CD4-positive, alpha-beta memory T cell (primary cell): ENCODE measurements at regions of chrX and their contacts with region 1.

Region 1: DNA sequence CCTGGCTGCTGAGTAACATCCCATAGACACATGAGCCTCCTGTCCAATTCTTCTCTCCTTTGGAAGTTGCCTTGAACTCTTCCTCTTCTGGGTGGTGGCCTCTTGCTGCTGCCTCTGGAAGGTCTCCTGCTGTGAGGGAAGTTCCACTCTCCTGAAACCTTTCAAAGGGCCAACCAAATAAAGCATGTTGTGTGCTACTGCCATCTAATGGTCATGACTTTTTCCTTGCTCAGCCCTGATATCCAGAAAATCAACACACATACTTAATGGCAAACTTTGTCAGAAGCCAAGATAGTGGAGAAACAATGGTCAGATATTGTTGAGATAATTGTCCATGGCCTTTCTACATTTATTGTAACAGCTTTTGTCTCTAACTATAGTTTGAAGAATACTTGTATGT is 19.1 kb upstream of the ZXDA start:
- DNase-seq: no peak
- H3K4me3 ChIP-seq: no peak overlapping the region
- H3K4me3 Mint-ChIP-seq: no peak overlapping the region
- H3K27ac ChIP-seq: no peak overlapping the region
- H3K27ac Mint-ChIP-seq: peak overlapping the region in 1 of 7 donors; percentile 22
- H3K4me1 ChIP-seq: no peaks in the 10 kb centered on the region
- H3K4me1 Mint-ChIP-seq: peaks cover 0 to 2% (median 0%) of the 10 kb centered on the region in 4 donors
- H3K27me3 ChIP-seq: no peaks in the 10 kb centered on the region
- H3K27me3 Mint-ChIP-seq: no peaks in the 10 kb centered on the region

Region 2: DNA sequence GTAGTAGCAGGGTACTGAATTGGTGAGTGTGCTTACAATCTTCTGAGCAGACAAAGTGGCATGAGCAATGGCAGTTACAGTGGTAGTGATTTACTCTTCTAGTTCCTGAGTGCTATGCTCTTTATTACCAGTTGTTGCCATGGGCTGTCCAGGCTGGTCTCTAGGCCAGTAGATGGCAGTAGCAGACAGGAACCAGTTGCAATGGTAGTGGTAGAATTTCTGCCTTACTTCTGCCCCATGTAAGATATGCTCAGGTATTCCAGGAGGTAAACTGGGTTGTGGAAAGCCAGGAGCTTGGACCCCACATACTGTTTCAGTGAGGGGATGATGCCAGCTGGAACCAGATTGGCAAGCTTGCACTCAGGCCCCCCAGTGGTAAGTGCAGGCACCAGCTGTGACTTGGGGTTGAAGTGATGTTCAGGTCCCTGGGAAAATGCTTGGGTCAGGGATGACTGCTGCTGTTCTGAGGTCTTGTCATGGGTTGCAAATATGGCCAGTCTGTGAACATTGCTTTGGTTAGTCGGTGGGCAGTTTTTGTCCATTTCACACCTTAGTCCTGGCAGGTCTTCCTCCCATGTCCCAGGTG is 400.6 kb before region 1 on chrX:
- CTCF ChIA-PET with region 1: no interaction called
- POLR2A ChIA-PET with region 1: no interaction called
- intact Hi-C with region 1: loop called (anchors 5 kb)
- DNase-seq: peak in 4 of 5 donors; percentile 4 to 14 (median 8)
- H3K4me3 ChIP-seq: no peak overlapping the region
- H3K4me3 Mint-ChIP-seq: no peak overlapping the region
- H3K27ac ChIP-seq: no peak overlapping the region
- H3K27ac Mint-ChIP-seq: no peak overlapping the region
- H3K4me1 ChIP-seq: no peaks in the 10 kb centered on the region
- H3K4me1 Mint-ChIP-seq: peaks cover 0 to 1% (median 0%) of the 10 kb centered on the region in 4 donors
- H3K27me3 ChIP-seq: no peaks in the 10 kb centered on the region
- H3K27me3 Mint-ChIP-seq: peaks cover 1% of the 10 kb centered on the region in 2 donors

Region 3: GRCh38 chrX:57573754-57574153 is 355.6 kb before region 1 on chrX:
- CTCF ChIA-PET with region 1: no interaction called
- POLR2A ChIA-PET with region 1: no interaction called
- intact Hi-C with region 1: loop called (anchors 2 kb)
- DNase-seq: peak in 2 of 5 donors; percentile 6 to 17
- H3K4me3 ChIP-seq: no peak overlapping the region
- H3K4me3 Mint-ChIP-seq: no peak overlapping the region
- H3K27ac ChIP-seq: no peak overlapping the region
- H3K27ac Mint-ChIP-seq: no peak overlapping the region
- H3K4me1 ChIP-seq: no peaks in the 10 kb centered on the region
- H3K4me1 Mint-ChIP-seq: peaks cover 0 to 4% (median under 1%) of the 10 kb centered on the region in 4 donors
- H3K27me3 ChIP-seq: no peaks in the 10 kb centered on the region
- H3K27me3 Mint-ChIP-seq: no peaks in the 10 kb centered on the region

Region 4: DNA sequence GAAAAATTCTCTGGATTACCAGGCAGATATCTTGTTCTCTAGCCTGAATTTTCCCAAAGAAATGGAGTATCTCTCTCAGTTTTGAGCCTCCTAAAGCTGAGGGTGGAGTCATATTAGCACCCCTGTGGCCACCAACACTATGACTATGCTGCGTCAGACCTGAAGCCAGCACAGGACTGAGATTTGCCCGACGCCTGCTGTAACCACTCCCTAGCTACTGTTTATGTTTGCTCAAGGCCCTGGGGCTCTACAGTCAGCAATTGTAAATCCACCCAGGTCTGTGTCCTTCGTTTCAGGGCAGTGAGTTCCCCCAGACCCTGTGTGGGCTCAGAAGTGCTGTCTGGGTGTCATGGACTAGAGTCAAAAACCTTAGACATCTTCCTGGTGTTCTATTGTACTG is 80.5 kb before region 1 on chrX:
- CTCF ChIA-PET with region 1: no interaction called
- POLR2A ChIA-PET with region 1: no interaction called
- intact Hi-C with region 1: no loop called
- DNase-seq: no peak
- H3K4me3 ChIP-seq: no peak overlapping the region
- H3K4me3 Mint-ChIP-seq: no peak overlapping the region
- H3K27ac ChIP-seq: no peak overlapping the region
- H3K27ac Mint-ChIP-seq: no peak overlapping the region
- H3K4me1 ChIP-seq: no peaks in the 10 kb centered on the region
- H3K4me1 Mint-ChIP-seq: no peaks in the 10 kb centered on the region
- H3K27me3 ChIP-seq: no peaks in the 10 kb centered on the region
- H3K27me3 Mint-ChIP-seq: no peaks in the 10 kb centered on the region

Region 5: DNA sequence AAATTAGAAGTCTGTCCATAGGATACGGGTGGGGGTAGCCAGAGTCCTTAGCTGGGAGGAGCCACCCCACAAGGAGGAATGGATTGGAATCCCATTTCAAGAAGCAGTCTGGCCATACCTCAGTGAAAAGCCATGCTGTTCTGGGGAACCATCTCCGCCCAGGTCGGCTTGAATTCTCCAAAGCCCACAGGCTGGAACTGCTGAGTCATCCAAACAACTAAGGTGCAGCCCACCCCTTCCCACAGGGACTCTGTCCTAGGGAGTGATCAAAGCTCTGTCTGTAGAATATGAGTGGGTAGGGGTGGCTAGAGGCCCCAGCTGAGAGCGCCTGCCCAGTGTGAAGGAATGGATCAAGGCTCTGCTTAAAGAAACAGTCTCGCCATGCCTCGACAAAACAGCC is 57.9 kb before region 1 on chrX:
- CTCF ChIA-PET with region 1: no interaction called
- POLR2A ChIA-PET with region 1: no interaction called
- intact Hi-C with region 1: no loop called
- DNase-seq: no peak
- H3K4me3 ChIP-seq: no peak overlapping the region
- H3K4me3 Mint-ChIP-seq: no peak overlapping the region
- H3K27ac ChIP-seq: no peak overlapping the region
- H3K27ac Mint-ChIP-seq: no peak overlapping the region
- H3K4me1 ChIP-seq: no peaks in the 10 kb centered on the region
- H3K4me1 Mint-ChIP-seq: no peaks in the 10 kb centered on the region
- H3K27me3 ChIP-seq: no peaks in the 10 kb centered on the region
- H3K27me3 Mint-ChIP-seq: no peaks in the 10 kb centered on the region

Region 6: DNA sequence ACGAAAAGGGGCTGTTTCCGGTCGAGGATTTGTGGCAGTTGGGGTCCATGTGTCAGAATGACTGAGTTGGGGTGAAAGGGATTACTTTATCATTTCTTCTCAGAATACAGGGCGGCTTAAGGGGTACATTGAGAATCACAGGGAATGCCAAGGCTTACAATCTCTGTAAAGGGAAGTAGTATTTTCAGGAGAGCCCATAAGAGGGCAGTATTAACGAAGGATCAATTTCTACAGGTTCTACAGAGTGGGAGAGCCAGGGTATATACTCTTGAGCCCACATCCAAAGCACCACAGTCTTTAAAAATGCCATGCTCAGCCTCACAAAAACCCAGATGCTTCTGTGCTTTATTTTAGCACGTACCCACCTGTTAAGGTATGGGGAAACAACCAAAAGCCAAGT is 48.6 kb after region 1 on chrX:
- CTCF ChIA-PET with region 1: no interaction called
- POLR2A ChIA-PET with region 1: no interaction called
- intact Hi-C with region 1: no loop called
- DNase-seq: no peak
- H3K4me3 ChIP-seq: no peak overlapping the region
- H3K4me3 Mint-ChIP-seq: no peak overlapping the region
- H3K27ac ChIP-seq: no peak overlapping the region
- H3K27ac Mint-ChIP-seq: no peak overlapping the region
- H3K4me1 ChIP-seq: no peaks in the 10 kb centered on the region
- H3K4me1 Mint-ChIP-seq: no peaks in the 10 kb centered on the region
- H3K27me3 ChIP-seq: no peaks in the 10 kb centered on the region
- H3K27me3 Mint-ChIP-seq: no peaks in the 10 kb centered on the region